Naive thymus-derived CD4-positive, alpha-beta T cell (primary cell): ENCODE measurements at regions of chr13 and their contacts with region 1.

Region 1: DNA sequence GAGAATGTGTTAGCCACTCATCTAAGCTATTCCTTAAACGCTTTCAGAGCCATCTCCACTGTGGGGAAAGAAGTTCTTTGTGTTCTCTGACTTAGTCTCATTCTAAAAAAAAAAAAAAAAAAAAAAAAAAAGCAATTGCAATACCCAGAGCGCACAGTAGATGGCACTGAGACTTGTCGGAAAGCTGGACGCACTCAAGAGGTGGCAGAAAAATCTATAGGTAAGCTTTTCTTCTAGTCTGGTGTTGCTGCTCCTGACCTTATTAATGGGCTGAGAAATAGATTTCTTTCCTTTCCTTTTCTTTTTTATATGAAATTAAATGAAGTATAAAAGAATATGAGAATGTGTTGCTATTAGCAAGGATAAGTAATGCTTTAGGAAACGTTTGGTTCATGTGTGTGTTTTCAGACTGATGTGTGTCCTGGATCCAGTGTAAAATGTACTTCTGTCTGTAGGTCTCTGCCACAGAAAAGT is 4.7 kb upstream of the GJB2 start:
- DNase-seq: peak in 5 of 9 donors; percentile 38 to 59 (median 51)
- ATAC-seq: peak; percentile 81
- H3K4me3 ChIP-seq: no peak overlapping the region
- H3K4me3 Mint-ChIP-seq: no peak overlapping the region
- H3K27ac ChIP-seq: no peak overlapping the region
- H3K27ac Mint-ChIP-seq: peak overlapping the region in 1 of 9 donors; percentile 57
- H3K4me1 ChIP-seq: peaks cover 11 to 20% of the 10 kb centered on the region in 2 donors
- H3K4me1 Mint-ChIP-seq: peaks cover 15 to 26% (median 19%) of the 10 kb centered on the region in 7 donors
- H3K27me3 ChIP-seq: peaks cover 27 to 41% of the 10 kb centered on the region in 2 donors
- H3K27me3 Mint-ChIP-seq: peaks cover 30 to 64% (median 48%) of the 10 kb centered on the region in 5 donors

Region 2: GRCh38 chr13:19805765-19806164 is 391.6 kb before region 1 on chr13:
- CTCF ChIA-PET with region 1: no interaction called
- POLR2A ChIA-PET with region 1: no interaction called
- intact Hi-C with region 1: no loop called
- DNase-seq: no peak
- ATAC-seq: no peak
- H3K4me3 ChIP-seq: no peak overlapping the region
- H3K4me3 Mint-ChIP-seq: no peak overlapping the region
- H3K27ac ChIP-seq: no peak overlapping the region
- H3K27ac Mint-ChIP-seq: no peak overlapping the region
- H3K4me1 ChIP-seq: no peaks in the 10 kb centered on the region
- H3K4me1 Mint-ChIP-seq: no peaks in the 10 kb centered on the region
- H3K27me3 ChIP-seq: no peaks in the 10 kb centered on the region
- H3K27me3 Mint-ChIP-seq: no peaks in the 10 kb centered on the region

Region 3: GRCh38 chr13:20182231-20182846 is 15.1 kb before region 1 on chr13:
- CTCF ChIA-PET with region 1: interaction called, 9 read pairs
- POLR2A ChIA-PET with region 1: no interaction called
- intact Hi-C with region 1: loop called in 1 of 2 experiments (anchors 2 kb)
- DNase-seq: peak in 7 of 9 donors; percentile 43 to 77 (median 67)
- ATAC-seq: peak; percentile 99
- H3K4me3 ChIP-seq: no peak overlapping the region
- H3K4me3 Mint-ChIP-seq: no peak overlapping the region
- H3K27ac ChIP-seq: no peak overlapping the region
- H3K27ac Mint-ChIP-seq: no peak overlapping the region
- H3K4me1 ChIP-seq: no peaks in the 10 kb centered on the region
- H3K4me1 Mint-ChIP-seq: no peaks in the 10 kb centered on the region
- H3K27me3 ChIP-seq: peaks cover 0 to 10% of the 10 kb centered on the region in 2 donors
- H3K27me3 Mint-ChIP-seq: peaks cover 37 to 48% (median 43%) of the 10 kb centered on the region in 5 donors

Region 4: DNA sequence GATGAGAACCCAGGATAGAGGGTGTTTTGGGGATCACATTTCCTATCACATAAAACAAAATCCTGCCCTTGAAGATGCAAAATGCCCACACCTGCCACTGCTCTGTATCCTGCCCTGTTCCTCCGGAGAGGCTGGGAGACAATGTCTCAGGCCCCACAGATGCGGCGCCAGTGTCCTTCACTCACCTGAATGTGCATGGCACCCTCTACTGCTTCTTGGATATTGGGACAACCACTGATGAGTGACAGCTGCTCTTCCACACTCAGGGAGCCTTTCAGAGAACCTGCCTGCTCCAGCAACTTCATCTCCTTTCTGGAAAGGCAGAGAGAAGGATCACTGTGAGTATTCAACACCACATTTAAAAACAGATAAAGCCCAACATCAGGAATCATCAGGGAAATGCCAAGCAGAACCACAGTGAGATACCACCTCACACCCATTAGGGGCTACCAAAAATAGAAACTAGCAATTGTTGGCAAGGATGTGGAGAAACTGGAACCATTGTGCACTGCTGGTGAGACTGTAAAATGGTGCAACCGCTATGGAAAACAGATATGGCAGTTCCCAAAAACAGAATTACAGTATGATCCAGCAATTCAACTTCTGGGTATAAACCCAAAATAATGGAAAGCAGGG is 291.9 kb after region 1 on chr13:
- CTCF ChIA-PET with region 1: no interaction called
- POLR2A ChIA-PET with region 1: no interaction called
- intact Hi-C with region 1: loop called in 1 of 2 experiments (anchors 1 kb)
- DNase-seq: peak in 4 of 9 donors; percentile 24 to 61 (median 46)
- ATAC-seq: peak; percentile 85
- H3K4me3 ChIP-seq: no peak overlapping the region
- H3K4me3 Mint-ChIP-seq: no peak overlapping the region
- H3K27ac ChIP-seq: no peak overlapping the region
- H3K27ac Mint-ChIP-seq: peak overlapping the region in 2 of 9 donors; percentile 51 to 75
- H3K4me1 ChIP-seq: no peaks in the 10 kb centered on the region
- H3K4me1 Mint-ChIP-seq: peaks cover 5 to 17% (median 12%) of the 10 kb centered on the region in 7 donors
- H3K27me3 ChIP-seq: no peaks in the 10 kb centered on the region
- H3K27me3 Mint-ChIP-seq: no peaks in the 10 kb centered on the region

Region 5: DNA sequence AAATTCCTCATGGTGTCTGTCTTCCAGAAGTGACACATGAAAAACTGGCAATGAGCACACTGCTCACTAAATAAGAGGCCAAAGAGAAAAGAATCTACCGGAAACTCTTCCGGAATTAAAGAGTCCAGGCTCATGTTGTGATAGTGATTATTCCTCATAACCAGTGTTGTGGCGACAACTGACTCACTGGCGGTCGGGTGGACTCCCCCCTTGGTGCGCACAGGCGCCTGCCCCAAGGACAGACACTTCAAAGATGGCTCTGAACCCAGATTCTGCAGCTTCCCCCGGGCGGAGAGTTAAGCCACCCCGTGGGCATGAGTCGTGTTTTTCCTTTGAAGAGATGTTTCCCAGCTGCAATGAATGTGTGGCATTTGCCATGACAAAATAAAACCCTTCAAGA is 516.4 kb after region 1 on chr13:
- CTCF ChIA-PET with region 1: interaction called, 3 read pairs
- POLR2A ChIA-PET with region 1: no interaction called
- intact Hi-C with region 1: loop called in 1 of 2 experiments (anchors 5 kb)
- DNase-seq: no peak
- ATAC-seq: no peak
- H3K4me3 ChIP-seq: no peak overlapping the region
- H3K4me3 Mint-ChIP-seq: no peak overlapping the region
- H3K27ac ChIP-seq: no peak overlapping the region
- H3K27ac Mint-ChIP-seq: no peak overlapping the region
- H3K4me1 ChIP-seq: no peaks in the 10 kb centered on the region
- H3K4me1 Mint-ChIP-seq: peaks cover 5 to 13% (median 8%) of the 10 kb centered on the region in 7 donors
- H3K27me3 ChIP-seq: no peaks in the 10 kb centered on the region
- H3K27me3 Mint-ChIP-seq: peaks cover 0 to 7% (median 6%) of the 10 kb centered on the region in 5 donors

Region 6: DNA sequence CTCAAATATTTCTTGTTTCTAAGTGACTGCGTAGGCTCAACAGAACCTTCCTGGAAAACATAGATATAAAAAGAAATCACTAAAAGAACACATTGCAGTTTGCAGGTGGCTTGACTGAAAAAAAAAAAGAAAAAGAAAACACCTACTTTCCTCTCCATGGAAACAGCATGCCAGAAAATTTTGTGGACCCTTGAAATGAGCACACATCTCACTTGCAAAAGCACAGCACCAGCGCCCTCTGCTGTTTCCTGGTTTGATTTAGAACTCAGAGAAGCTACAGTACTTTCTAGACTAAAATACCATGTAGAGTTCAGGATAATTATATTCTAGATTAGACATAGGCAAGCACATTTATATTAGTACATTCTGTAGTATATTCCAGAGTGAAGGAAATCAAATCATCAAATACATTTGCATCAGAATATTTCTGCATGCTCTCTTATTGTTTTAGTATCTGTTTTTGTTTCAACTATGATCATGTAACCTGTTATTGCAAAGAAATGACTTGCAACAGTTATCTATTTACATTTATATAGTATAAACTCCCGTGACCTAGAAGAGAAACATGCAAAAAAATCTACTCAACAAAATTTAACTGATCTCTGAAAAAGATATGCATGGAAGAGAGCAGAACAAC is 727.5 kb after region 1 on chr13:
- CTCF ChIA-PET with region 1: interaction called, 6 read pairs
- POLR2A ChIA-PET with region 1: no interaction called
- intact Hi-C with region 1: loop called in 1 of 2 experiments (anchors 1 kb)
- DNase-seq: peak; percentile 26 to 68 (median 59)
- ATAC-seq: peak; percentile 72
- H3K4me3 ChIP-seq: no peak overlapping the region
- H3K4me3 Mint-ChIP-seq: no peak overlapping the region
- H3K27ac ChIP-seq: no peak overlapping the region
- H3K27ac Mint-ChIP-seq: no peak overlapping the region
- H3K4me1 ChIP-seq: no peaks in the 10 kb centered on the region
- H3K4me1 Mint-ChIP-seq: no peaks in the 10 kb centered on the region
- H3K27me3 ChIP-seq: no peaks in the 10 kb centered on the region
- H3K27me3 Mint-ChIP-seq: peaks cover 0 to 6% (median 0%) of the 10 kb centered on the region in 5 donors